ENCODE measurements at regions of chr9 and their contacts with region 1.

Region 1: GRCh38 chr9:385818-386398 is 171.2 kb downstream of the DOCK8 start:
- DNase-seq: peak; percentile 51
- H3K4me3 ChIP-seq: no peak overlapping the region
- H3K27ac ChIP-seq: no peak overlapping the region
- H3K4me1 ChIP-seq: no peaks in the 10 kb centered on the region
- H3K27me3 ChIP-seq: no peaks in the 10 kb centered on the region
- CTCF ChIP-seq: peak; percentile 84 to 95 (median 86)
- EP300 ChIP-seq: no peak
- POLR2A ChIP-seq: no peak

Region 2: DNA sequence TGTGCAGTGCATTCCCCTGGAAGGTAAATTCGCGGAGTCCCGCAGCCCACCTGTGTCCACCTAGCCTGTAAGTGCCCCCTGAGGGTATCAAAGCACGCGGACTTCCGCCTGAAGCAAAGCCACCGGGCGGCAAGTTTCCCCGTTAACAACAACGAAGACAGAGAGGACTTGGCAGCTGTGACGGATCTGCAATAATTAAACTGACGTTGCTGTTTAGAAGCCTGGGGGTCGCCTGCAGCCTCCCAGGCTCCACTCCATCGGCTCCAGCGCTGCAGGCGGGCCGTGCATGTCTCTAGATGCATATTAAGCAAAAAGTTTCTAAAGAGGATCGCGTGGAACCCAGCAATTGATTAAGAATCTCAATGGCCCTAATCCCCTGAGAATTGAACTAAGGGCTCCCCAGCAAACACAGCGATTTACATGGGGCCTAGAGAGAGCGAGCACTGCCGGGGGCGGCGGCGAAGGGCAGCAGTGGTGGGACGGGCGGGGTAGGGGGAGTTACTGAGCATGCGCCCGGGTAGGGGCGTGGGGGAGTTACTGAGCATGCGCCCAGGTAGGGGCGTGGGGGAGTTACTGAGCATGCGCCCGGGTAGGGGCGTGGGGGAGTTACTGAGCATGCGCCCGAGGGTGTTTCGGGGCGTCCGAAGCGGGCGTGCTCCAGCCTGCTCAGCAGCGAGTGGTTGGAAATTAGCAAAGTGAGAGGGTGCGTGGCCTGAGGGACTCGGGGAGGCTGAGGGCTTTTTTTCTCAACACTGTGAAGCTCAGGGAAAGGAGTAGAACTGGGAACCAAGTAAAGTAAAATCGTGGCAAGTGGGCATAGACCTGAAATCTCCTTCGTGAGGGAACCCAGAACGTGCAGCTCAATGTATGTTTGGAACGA is 84.0 kb after region 1 on chr9:
- in situ Hi-C with region 1: no loop called
- intact Hi-C with region 1: no loop called
- DNase-seq: peak; percentile 90
- H3K4me3 ChIP-seq: peak overlapping the region; percentile 50 to 68 (median 52)
- H3K27ac ChIP-seq: peak overlapping the region; percentile 84 to 94 (median 91)
- H3K4me1 ChIP-seq: peaks cover 5 to 25% (median 18%) of the 10 kb centered on the region in 4 donors
- H3K27me3 ChIP-seq: no peaks in the 10 kb centered on the region
- CTCF ChIP-seq: peak in 1 of 5 experiments; percentile 8
- EP300 ChIP-seq: no peak
- POLR2A ChIP-seq: peak; percentile 70

Region 3: GRCh38 chr9:546797-547223 is 160.9 kb after region 1 on chr9:
- in situ Hi-C with region 1: no loop called
- intact Hi-C with region 1: loop called (anchors 5 kb)
- DNase-seq: no peak
- H3K4me3 ChIP-seq: no peak overlapping the region
- H3K27ac ChIP-seq: peak overlapping the region; percentile 16 to 65 (median 20)
- H3K4me1 ChIP-seq: peaks cover 4 to 18% (median 7%) of the 10 kb centered on the region in 4 donors
- H3K27me3 ChIP-seq: no peaks in the 10 kb centered on the region
- CTCF ChIP-seq: peak in 3 of 5 experiments; percentile 21 to 33 (median 32)
- EP300 ChIP-seq: no peak
- POLR2A ChIP-seq: no peak

Region 4: DNA sequence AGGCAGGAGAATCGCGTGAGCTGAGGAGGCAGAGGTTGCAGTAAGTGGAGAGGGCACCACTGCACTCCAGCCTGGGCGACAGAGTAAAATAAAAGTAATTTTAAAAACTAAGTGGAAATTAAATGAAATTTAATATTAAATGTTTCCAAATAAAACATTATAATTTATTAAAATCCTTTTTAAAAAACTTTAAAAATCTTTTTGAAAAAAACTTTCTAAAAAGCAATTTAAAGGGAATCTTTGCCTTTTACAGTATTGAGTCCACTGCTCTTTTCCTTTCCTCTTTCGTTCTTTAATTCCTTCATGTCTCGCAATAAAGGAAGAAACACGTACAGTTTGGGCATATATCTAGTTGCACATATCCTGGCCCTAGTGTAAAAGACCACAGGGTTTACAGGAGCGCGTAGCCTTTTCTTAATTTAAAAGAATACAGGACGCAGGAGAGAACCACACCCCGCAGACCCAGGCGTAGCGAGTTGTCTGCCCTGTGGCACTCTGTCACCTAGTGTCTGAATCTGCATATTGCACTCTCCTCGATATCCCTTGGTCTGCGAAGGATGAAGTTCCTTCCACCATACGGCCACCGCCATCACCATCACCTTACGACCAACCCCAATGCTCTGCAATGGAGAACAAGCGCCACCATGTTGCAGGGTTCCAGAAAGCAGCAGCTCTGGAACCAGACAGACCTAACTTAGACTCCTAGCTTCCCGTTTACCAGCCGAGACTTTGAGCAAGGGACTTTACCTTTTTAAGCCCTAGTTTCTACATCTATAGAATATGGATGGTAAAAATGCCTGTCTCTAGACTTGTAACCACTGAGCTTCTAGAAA is 378.0 kb after region 1 on chr9:
- in situ Hi-C with region 1: loop called in 1 of 4 experiments (anchors 10 kb)
- intact Hi-C with region 1: no loop called
- DNase-seq: peak; percentile 76
- H3K4me3 ChIP-seq: no peak overlapping the region
- H3K27ac ChIP-seq: peak overlapping the region in 1 of 4 donors; percentile 29
- H3K4me1 ChIP-seq: peaks cover 0 to 6% (median 2%) of the 10 kb centered on the region in 4 donors
- H3K27me3 ChIP-seq: peaks cover 17% of the 10 kb centered on the region
- CTCF ChIP-seq: peak; percentile 89 to 96 (median 94)
- EP300 ChIP-seq: no peak
- POLR2A ChIP-seq: no peak

Measured in transverse colon (tissue), 4 donors.